ENCODE measurements at regions of chr12 and their contacts with region 1.

Region 1: DNA sequence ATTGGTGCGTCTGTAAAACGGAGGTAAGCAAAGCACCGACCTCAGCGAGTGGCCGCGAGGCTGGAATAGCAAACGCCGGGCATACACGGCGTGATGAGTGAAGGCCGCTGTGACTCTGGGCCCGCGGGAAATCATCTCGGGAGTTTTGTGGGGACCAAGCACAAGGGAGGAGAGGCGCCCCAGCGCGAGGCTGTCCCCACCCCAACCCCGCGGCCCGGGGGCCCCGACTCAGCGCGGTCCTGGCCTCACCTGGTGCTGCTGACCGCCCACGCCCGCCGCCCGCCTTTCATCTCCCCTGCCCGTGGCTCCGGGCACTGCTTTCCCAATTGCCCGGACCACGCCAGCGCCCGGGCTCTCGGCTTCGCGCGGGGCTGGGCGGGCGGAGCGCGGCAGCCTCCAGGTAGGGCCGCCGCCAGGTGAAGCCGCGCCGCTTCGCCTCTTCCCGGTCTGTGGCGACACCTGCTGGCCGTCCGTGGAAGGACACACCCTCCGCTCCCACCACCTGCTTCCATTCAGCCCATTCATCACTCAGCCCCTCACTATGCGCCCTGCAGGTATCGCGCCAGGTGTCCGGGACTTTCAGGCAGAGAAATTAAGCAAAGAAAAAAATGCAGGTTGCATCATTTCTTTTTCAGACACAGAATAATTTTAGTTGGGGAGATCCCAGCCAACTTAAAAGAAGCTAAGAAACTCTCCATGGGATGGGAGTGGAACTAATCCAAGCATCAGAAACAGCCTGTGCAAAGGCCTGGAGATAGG is 360.4 kb downstream of the MED13L start:
- DNase-seq: peak; percentile 27
- H3K4me3 ChIP-seq: no peak overlapping the region
- H3K27ac ChIP-seq: no peak overlapping the region
- H3K4me1 ChIP-seq: no peaks in the 10 kb centered on the region
- H3K27me3 ChIP-seq: no peaks in the 10 kb centered on the region
- CTCF ChIP-seq: peak; percentile 84

Region 2: GRCh38 chr12:114625294-114625851 is 1291.7 kb before region 1 on chr12:
- CTCF ChIA-PET with region 1: no interaction called
- POLR2A ChIA-PET with region 1: no interaction called
- intact Hi-C with region 1: loop called (anchors 2 kb)
- DNase-seq: peak; percentile 56
- H3K4me3 ChIP-seq: no peak overlapping the region
- H3K27ac ChIP-seq: no peak overlapping the region
- H3K4me1 ChIP-seq: no peaks in the 10 kb centered on the region
- H3K27me3 ChIP-seq: no peaks in the 10 kb centered on the region
- CTCF ChIP-seq: peak; percentile 77

Measured in A673 (cell line).